ENCODE measurements at regions of chr6 and their contacts with region 1.

Region 1: GRCh38 chr6:43297644-43298564 is at the start of gene SLC22A7:
- DNase-seq: no peak
- ATAC-seq: no peak
- H3K4me3 ChIP-seq: no peak within 1 kb of the TSS
- H3K4me3 Mint-ChIP-seq: no peak within 1 kb of the TSS
- H3K27ac ChIP-seq: no peak within 1 kb of the TSS
- H3K27ac Mint-ChIP-seq: no peak within 1 kb of the TSS
- H3K4me1 ChIP-seq: no peaks in the 10 kb centered on the region
- H3K4me1 Mint-ChIP-seq: no peaks in the 10 kb centered on the region
- H3K27me3 ChIP-seq: peaks cover 0 to 5% of the 10 kb centered on the region in 2 experiments
- H3K27me3 Mint-ChIP-seq: peaks cover 13% of the 10 kb centered on the region
- CTCF ChIP-seq: no peak
- total RNA-seq, gene SLC22A7: not detected

Region 2: DNA sequence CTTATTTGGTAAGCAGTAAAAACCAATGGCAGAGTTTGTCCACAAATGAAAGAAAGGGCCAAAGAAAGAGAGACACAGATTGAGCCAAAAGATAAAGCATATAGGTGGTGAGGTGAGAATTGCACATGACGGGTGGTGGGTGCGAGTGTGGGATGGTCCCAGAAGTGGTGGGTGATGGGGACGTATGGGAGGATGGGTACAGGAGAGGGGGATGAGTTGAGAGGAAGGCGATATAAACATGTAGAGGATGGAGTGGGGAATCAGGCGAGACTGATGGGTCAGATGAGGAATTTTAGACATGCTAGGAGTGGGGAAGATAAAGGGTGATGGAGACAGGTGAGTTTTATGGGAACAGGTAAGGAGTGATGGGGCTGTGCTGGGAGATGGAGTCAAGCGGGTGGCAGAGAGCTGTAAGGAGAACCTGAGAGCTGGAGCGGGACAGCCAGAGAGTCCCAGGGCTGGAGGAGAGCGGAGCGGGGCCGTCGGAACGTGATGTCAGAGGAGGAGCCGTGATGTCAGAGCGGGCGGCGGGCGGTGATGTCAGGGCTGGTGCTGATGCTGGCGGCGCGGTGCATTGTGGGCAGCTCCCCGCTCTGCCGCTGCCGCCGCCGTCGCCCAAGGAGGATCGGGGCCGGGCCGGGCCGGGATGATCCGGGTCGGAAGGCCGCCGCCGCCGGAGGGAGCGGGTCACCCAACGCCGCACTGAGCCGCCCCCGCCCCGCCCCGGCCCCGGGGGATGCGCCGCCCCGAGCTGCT is 54.8 kb before region 1 on chr6 and contains the start of gene TTBK1:
- CTCF ChIA-PET with region 1: no interaction called
- POLR2A ChIA-PET with region 1: no interaction called
- intact Hi-C with region 1: no loop called
- DNase-seq: peak in 4 of 14 experiments; percentile 33 to 72 (median 54)
- ATAC-seq: no peak
- H3K4me3 ChIP-seq: no peak within 1 kb of the TSS
- H3K4me3 Mint-ChIP-seq: no peak within 1 kb of the TSS
- H3K27ac ChIP-seq: no peak within 1 kb of the TSS
- H3K27ac Mint-ChIP-seq: no peak within 1 kb of the TSS
- H3K4me1 ChIP-seq: peaks cover 20% of the 10 kb centered on the region
- H3K4me1 Mint-ChIP-seq: peaks cover 15% of the 10 kb centered on the region
- H3K27me3 ChIP-seq: peaks cover 33 to 45% of the 10 kb centered on the region in 2 experiments
- H3K27me3 Mint-ChIP-seq: peaks cover 19% of the 10 kb centered on the region
- CTCF ChIP-seq: no peak
- total RNA-seq, gene TTBK1: not detected

Region 3: GRCh38 chr6:43254138-43254817 is 43.6 kb before region 1 on chr6:
- CTCF ChIA-PET with region 1: no interaction called
- POLR2A ChIA-PET with region 1: no interaction called
- intact Hi-C with region 1: no loop called
- DNase-seq: no peak
- ATAC-seq: no peak
- H3K4me3 ChIP-seq: no peak overlapping the region
- H3K4me3 Mint-ChIP-seq: no peak overlapping the region
- H3K27ac ChIP-seq: no peak overlapping the region
- H3K27ac Mint-ChIP-seq: no peak overlapping the region
- H3K4me1 ChIP-seq: peaks cover 5% of the 10 kb centered on the region
- H3K4me1 Mint-ChIP-seq: peaks cover 7% of the 10 kb centered on the region
- H3K27me3 ChIP-seq: peaks cover 0 to 11% of the 10 kb centered on the region in 2 experiments
- H3K27me3 Mint-ChIP-seq: peaks cover 44% of the 10 kb centered on the region
- CTCF ChIP-seq: no peak

Region 4: GRCh38 chr6:43286980-43287716 is 10.8 kb before region 1 on chr6:
- CTCF ChIA-PET with region 1: no interaction called
- POLR2A ChIA-PET with region 1: no interaction called
- intact Hi-C with region 1: no loop called
- DNase-seq: no peak
- ATAC-seq: no peak
- H3K4me3 ChIP-seq: no peak overlapping the region
- H3K4me3 Mint-ChIP-seq: no peak overlapping the region
- H3K27ac ChIP-seq: no peak overlapping the region
- H3K27ac Mint-ChIP-seq: no peak overlapping the region
- H3K4me1 ChIP-seq: no peaks in the 10 kb centered on the region
- H3K4me1 Mint-ChIP-seq: no peaks in the 10 kb centered on the region
- H3K27me3 ChIP-seq: peaks cover 9 to 13% of the 10 kb centered on the region in 2 experiments
- H3K27me3 Mint-ChIP-seq: peaks cover 30% of the 10 kb centered on the region
- CTCF ChIP-seq: no peak

Region 5: DNA sequence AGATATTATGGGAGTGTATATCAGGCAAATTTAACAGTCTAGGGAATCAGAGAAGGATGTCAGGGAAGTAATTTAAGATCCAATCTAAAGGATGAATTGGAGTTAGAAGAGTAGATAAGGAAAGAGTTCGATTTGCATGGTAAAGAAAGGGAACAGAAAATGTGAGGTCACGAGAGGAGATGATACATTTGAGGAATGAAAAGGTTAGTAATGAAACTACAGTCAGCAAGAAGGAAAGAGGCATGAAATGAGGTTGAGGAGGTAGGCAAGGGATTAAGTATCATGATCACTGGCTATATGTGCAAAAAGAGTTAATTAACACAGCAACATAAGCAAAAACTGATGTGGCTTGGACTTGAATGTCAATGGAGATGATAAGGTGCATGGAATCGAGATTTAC is 49.1 kb after region 1 on chr6:
- CTCF ChIA-PET with region 1: no interaction called
- POLR2A ChIA-PET with region 1: no interaction called
- intact Hi-C with region 1: loop called in 1 of 2 experiments (anchors 10 kb)
- DNase-seq: no peak
- ATAC-seq: no peak
- H3K4me3 ChIP-seq: no peak overlapping the region
- H3K4me3 Mint-ChIP-seq: no peak overlapping the region
- H3K27ac ChIP-seq: no peak overlapping the region
- H3K27ac Mint-ChIP-seq: no peak overlapping the region
- H3K4me1 ChIP-seq: no peaks in the 10 kb centered on the region
- H3K4me1 Mint-ChIP-seq: no peaks in the 10 kb centered on the region
- H3K27me3 ChIP-seq: no peaks in the 10 kb centered on the region
- H3K27me3 Mint-ChIP-seq: no peaks in the 10 kb centered on the region
- CTCF ChIP-seq: no peak

Region 6: DNA sequence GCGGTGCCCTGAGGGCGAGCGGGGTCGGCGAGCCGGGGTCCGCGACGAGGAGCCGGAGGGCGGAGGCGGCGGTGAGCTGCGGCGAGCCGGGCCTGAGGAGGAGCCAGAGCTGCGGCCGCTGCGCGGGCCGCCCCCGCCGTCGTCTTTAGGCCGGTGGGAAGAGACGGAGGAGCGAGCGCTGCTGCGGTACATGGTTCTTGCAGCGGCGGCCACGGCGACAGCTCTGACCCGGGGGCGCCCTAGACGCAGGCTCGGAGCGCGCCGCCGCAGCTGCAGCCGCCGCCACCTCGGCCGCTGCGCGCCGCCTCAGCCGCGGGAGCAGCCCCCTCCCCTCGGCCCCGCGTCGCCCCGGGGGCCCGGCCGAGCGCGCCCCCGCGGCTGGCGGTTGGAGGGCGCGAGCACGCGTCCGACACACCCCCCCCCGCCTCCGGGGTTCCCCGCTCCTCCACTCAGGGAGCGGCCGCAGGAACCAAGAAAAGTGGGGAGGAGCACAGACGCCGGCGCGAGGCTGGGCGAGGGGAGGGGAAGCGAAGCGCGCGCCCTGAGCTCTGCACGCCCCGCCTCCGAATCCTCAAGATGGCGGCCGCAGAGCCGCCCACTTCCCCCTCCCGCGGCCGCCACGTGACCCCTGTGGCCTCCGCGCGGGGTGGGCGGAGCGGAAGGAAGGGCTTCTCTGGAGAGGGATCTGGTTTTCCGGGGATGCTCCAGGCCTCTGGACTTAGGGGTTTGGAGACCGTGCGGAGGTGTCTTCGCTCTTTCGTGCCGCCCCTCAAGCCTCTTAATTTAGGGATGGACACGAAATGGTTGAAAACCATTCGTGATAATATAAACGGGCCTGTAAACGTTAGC is 71.5 kb after region 1 on chr6 and contains the start of gene ZNF318:
- CTCF ChIA-PET with region 1: no interaction called
- POLR2A ChIA-PET with region 1: no interaction called
- intact Hi-C with region 1: no loop called
- DNase-seq: peak; percentile 88 to 99 (median 92)
- ATAC-seq: peak; percentile 95
- H3K4me3 ChIP-seq: peak within 1 kb of the TSS; percentile 77
- H3K4me3 Mint-ChIP-seq: peak within 1 kb of the TSS; percentile 96
- H3K27ac ChIP-seq: peak within 1 kb of the TSS; percentile 76 to 85
- H3K27ac Mint-ChIP-seq: peak within 1 kb of the TSS; percentile 95
- H3K4me1 ChIP-seq: peaks cover 38% of the 10 kb centered on the region
- H3K4me1 Mint-ChIP-seq: peaks cover 49% of the 10 kb centered on the region
- H3K27me3 ChIP-seq: no peaks in the 10 kb centered on the region
- H3K27me3 Mint-ChIP-seq: no peaks in the 10 kb centered on the region
- CTCF ChIP-seq: no peak
- total RNA-seq, gene ZNF318: 20.4 TPM